ENCODE measurements at regions of chr6 and their contacts with region 1.

Region 1: GRCh38 chr6:34602318-34603111 is 46.4 kb upstream of the SPDEF start:
- DNase-seq: no peak
- H3K4me3 ChIP-seq: no peak overlapping the region
- H3K27ac ChIP-seq: no peak overlapping the region
- H3K4me1 ChIP-seq: peaks cover 37 to 60% (median 51%) of the 10 kb centered on the region in 4 donors
- H3K27me3 ChIP-seq: no peaks in the 10 kb centered on the region
- CTCF ChIP-seq: no peak
- EP300 ChIP-seq: no peak
- POLR2A ChIP-seq: no peak

Region 2: GRCh38 chr6:34425498-34426410 is 176.8 kb before region 1 on chr6 and contains the start of gene RPS10:
- intact Hi-C with region 1: loop called (anchors 10 kb)
- DNase-seq: peak; percentile 96
- H3K4me3 ChIP-seq: peak within 1 kb of the TSS; percentile 60 to 86 (median 80)
- H3K27ac ChIP-seq: peak within 1 kb of the TSS; percentile 79 to 91 (median 88)
- H3K4me1 ChIP-seq: peaks cover 15 to 39% (median 32%) of the 10 kb centered on the region in 4 donors
- H3K27me3 ChIP-seq: no peaks in the 10 kb centered on the region
- CTCF ChIP-seq: peak in 2 of 3 experiments; percentile 16 to 27
- EP300 ChIP-seq: no peak
- POLR2A ChIP-seq: peak; percentile 71
- total RNA-seq, gene RPS10: 823 to 3,592 (median 2,534) TPM

Region 3: GRCh38 chr6:34748757-34749156 is 146.2 kb after region 1 on chr6:
- intact Hi-C with region 1: no loop called
- DNase-seq: no peak
- H3K4me3 ChIP-seq: no peak overlapping the region
- H3K27ac ChIP-seq: no peak overlapping the region
- H3K4me1 ChIP-seq: no peaks in the 10 kb centered on the region
- H3K27me3 ChIP-seq: no peaks in the 10 kb centered on the region
- CTCF ChIP-seq: no peak
- EP300 ChIP-seq: no peak
- POLR2A ChIP-seq: no peak

Region 4: GRCh38 chr6:35402136-35402855 is 799.8 kb after region 1 on chr6:
- intact Hi-C with region 1: no loop called
- DNase-seq: no peak
- H3K4me3 ChIP-seq: no peak overlapping the region
- H3K27ac ChIP-seq: no peak overlapping the region
- H3K4me1 ChIP-seq: peaks cover 0 to 4% (median 0%) of the 10 kb centered on the region in 4 donors
- H3K27me3 ChIP-seq: no peaks in the 10 kb centered on the region
- CTCF ChIP-seq: no peak
- EP300 ChIP-seq: no peak
- POLR2A ChIP-seq: no peak